ENCODE measurements at regions of chr10 and their contacts with region 1.

Region 1: DNA sequence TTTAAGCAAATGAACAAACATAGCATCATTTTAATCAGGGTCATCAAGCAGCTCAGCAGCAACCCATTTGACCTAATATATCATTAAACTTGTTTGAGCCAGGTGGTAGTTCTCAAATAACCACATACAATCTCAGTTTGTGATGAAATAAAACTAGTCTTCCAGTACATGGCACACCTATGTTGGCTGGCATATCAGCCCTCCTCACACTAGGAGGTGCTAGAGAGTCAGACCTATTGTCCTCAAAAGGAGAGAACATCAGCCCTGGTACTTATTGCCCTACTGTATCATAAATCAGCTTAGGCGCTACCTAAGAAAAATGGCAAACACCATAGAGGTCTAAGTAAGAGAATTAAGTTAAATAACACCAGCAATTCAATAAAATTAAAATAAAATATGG is 81.7 kb downstream of the CABCOCO1 start:
- DNase-seq: no peak
- H3K4me3 ChIP-seq: no peak overlapping the region
- H3K27ac ChIP-seq: no peak overlapping the region
- H3K4me1 ChIP-seq: no peaks in the 10 kb centered on the region
- H3K27me3 ChIP-seq: no peaks in the 10 kb centered on the region
- CTCF ChIP-seq: peak in 2 of 3 experiments; percentile 36 to 60; a peak in 3 of 4 replicates
- EP300 ChIP-seq: no peak
- POLR2A ChIP-seq: no peak
- RAD21 ChIP-seq: peak; percentile 33 to 42; a peak in 3 of 4 replicates

Region 2: DNA sequence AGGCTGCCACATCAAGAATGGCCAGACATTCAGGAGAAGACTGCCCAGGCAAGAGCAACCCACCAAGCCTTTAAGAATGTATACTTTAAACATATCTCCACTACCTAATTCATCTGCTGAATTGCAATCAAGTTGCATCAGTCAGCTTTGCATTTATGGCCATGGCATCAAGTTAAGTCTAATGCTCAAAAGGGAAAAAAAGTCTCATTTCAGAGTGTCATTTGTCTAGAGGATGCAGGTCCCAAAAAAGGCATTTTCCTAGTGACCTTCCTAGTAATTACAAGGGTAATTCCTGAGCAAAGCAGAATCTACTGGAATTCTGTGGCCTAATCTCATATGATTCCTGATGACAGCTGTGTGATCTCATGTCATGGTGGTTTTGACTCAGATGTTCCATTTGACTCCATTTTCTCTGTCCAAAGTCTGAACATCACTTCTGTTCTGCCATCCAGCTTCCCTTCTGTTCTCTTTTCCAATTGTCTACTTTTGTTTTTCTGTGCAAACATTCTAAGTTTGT is 89.1 kb before region 1 on chr10:
- CTCF ChIA-PET with region 1: no interaction called
- POLR2A ChIA-PET with region 1: no interaction called
- DNase-seq: no peak
- H3K4me3 ChIP-seq: no peak overlapping the region
- H3K27ac ChIP-seq: no peak overlapping the region
- H3K4me1 ChIP-seq: no peaks in the 10 kb centered on the region
- H3K27me3 ChIP-seq: no peaks in the 10 kb centered on the region
- CTCF ChIP-seq: no peak
- EP300 ChIP-seq: no peak
- POLR2A ChIP-seq: no peak
- RAD21 ChIP-seq: no peak

Region 3: DNA sequence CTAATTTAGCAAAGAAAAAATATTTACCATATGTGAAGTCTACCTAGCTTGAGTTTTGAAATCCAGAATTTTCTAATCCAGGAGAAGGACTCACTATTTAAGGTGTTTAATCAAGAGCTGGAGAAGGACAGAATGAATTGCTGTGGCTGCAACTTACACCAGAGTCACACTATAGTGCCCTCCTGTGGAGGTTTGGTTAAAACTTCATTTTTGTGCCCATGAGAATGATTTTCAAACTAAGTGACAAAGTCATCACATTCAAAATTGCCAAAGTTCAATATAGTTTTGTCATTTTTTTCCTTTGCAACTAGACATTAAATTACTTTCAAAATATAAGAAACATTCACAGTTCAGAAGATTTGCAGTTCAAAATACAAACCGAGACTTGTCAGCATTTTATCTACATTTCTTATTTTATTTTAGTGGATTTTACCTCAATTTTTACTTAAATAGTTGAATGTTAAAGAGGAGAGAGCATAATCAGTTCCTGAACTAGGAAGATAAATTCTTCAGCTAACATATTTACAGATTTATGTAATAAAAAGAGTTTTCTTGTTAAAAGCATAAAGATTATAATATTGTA is 11.0 kb before region 1 on chr10:
- CTCF ChIA-PET with region 1: interaction called, 49 read pairs
- POLR2A ChIA-PET with region 1: no interaction called
- DNase-seq: no peak
- H3K4me3 ChIP-seq: no peak overlapping the region
- H3K27ac ChIP-seq: no peak overlapping the region
- H3K4me1 ChIP-seq: no peaks in the 10 kb centered on the region
- H3K27me3 ChIP-seq: no peaks in the 10 kb centered on the region
- CTCF ChIP-seq: peak in 2 of 3 experiments; percentile 46 to 61; a peak in 2 of 4 replicates
- EP300 ChIP-seq: no peak
- POLR2A ChIP-seq: no peak
- RAD21 ChIP-seq: peak; percentile 76 to 79

Region 4: DNA sequence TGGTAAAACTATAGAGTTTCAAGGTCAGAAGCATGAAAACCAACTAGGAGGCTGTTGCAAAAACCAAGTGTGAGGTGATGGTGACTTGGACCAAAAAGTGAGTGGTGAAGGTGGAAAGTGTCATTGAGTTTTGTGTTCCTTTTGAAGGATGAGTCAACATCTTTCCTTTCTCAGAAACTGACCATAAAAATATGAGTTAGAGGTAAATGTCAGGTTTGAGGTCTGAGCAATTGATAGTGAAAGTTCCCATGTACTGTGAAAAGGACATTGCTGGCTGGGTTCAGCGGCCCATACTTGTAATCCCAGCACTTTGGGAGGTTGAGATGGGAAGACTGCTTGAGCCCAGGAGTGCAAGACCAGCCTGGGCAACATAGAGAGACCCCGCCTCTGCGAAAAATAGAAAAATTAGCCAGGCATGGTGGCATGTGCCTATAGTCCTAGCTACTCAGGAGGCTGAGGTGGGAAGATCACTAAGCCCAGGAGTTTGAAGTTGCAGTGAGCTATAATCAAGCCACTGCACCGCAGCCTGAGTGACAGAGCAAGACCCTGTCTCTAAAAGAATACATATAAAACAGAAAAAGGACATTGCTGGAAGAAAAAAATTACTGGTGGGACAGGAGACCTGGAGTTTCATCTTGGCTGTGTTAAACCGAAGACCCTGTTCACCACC is 67.7 kb after region 1 on chr10:
- CTCF ChIA-PET with region 1: interaction called, 10 read pairs
- POLR2A ChIA-PET with region 1: no interaction called
- DNase-seq: no peak
- H3K4me3 ChIP-seq: no peak overlapping the region
- H3K27ac ChIP-seq: no peak overlapping the region
- H3K4me1 ChIP-seq: no peaks in the 10 kb centered on the region
- H3K27me3 ChIP-seq: no peaks in the 10 kb centered on the region
- CTCF ChIP-seq: no peak
- EP300 ChIP-seq: no peak
- POLR2A ChIP-seq: no peak
- RAD21 ChIP-seq: no peak